HEK293 (cell line): ENCODE measurements at regions of chr6 and their contacts with region 1.

Region 1: GRCh38 chr6:75526502-75527127 is 33.0 kb upstream of the FILIP1 start:
- H3K4me3 ChIP-seq: no peak overlapping the region
- H3K27ac ChIP-seq: no peak overlapping the region
- H3K4me1 ChIP-seq: peaks cover 20% of the 10 kb centered on the region
- CTCF ChIP-seq: peak; percentile 51

Region 2: DNA sequence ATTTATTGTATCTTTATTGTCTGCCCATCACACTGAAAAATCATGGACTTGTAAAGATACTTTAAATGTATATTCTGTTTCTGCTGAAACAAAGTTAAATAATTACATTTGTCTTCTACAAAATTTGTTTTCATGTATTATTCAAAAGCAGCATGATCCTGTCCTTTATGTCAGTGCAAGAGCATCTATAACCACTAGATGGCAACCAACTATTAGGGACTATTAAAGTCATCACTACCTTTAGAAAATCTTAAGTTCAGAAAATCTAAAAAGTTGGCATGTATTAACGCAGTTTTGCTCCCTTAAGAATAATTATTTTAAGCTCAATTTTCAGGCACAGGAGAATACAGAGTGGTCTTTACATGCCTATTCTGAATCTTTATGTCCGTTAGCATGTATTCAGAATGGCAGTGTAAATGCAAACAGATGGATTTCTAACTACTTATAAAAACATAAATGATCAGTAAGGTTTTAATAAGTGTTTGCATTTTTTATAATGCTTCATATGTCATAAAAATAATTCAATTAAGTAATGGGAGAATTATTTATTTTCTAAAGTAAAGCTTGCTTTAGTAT is 259.8 kb before region 1 on chr6:
- CTCF ChIA-PET with region 1: interaction called, 26 read pairs
- POLR2A ChIA-PET with region 1: interaction called, 6 read pairs
- H3K4me3 ChIP-seq: no peak overlapping the region
- H3K27ac ChIP-seq: no peak overlapping the region
- H3K4me1 ChIP-seq: peaks cover 14% of the 10 kb centered on the region
- CTCF ChIP-seq: no peak; the same call in 1 of the 2 replicates

Region 3: GRCh38 chr6:75284632-75285286 is 241.9 kb before region 1 on chr6 and contains the start of gene TMEM30A:
- CTCF ChIA-PET with region 1: interaction called, 5 read pairs
- POLR2A ChIA-PET with region 1: interaction called, 12 read pairs
- H3K4me3 ChIP-seq: peak within 1 kb of the TSS; percentile 97
- H3K27ac ChIP-seq: peak within 1 kb of the TSS; percentile 64
- H3K4me1 ChIP-seq: peaks cover 6% of the 10 kb centered on the region; the same call in 1 of the 2 replicates
- CTCF ChIP-seq: peak; percentile 66

Region 4: DNA sequence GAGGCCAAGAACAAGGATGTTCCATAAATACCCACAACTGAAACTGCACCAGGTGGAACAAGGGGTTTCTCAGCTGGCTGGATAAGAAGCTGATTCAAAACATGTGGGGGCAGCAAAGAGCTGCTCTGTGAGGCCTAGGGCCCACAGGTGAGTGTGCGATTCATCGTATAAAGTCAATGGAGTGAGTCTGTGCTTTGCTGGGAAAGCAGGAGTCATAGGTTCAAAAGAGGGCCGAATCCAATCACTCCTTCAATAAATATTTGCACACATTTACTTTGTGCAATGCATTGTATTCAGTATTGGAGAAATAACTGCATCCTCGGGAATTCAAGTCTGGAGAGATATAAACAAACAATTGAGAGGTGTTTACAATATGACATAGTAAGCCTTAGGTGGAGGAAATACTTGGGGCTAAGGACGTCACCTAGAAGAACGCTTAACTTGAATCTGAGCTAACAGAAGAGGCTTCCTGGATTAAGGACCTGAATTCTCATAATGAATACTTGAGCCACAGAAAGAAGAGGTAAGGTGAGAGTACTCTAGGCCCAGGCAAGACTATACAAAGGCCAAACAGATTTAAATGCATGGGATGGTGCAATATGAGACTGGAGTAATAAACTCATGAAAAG is 158.3 kb before region 1 on chr6:
- CTCF ChIA-PET with region 1: interaction called, 93 read pairs
- POLR2A ChIA-PET with region 1: interaction called, 9 read pairs
- H3K4me3 ChIP-seq: no peak overlapping the region
- H3K27ac ChIP-seq: no peak overlapping the region
- H3K4me1 ChIP-seq: no peaks in the 10 kb centered on the region
- CTCF ChIP-seq: peak; percentile 71

Region 5: DNA sequence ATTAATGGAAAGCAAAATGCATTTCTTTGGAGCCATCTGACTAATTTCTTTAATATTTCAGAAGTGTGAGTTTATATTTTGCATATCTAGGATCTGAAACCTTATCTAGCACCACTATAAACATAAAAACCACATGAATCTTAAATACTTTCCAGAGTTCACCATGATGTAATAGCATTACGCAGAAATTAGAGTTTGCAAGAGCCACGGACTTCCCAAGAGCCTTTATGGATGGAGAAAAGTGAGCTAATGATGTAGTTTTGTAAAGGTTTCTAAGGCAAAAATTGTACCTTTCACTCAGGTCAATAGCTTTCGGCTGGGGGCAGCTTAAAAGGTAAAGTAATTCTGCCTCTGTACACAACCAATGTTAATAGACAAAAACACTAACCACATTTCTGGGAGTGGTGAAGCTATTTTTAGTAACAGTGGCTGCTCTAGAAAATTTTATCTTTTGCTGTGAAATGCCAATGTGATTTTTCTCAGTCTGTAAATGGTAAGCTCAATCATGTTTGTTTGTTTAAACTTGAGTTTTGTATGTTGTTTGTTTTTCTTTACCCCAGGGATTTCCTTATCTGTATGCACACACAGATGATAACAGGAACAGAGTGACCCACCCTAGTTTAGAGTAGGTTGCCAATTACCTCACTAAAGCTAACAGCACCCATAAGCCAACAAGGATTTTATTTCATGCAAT is 113.5 kb before region 1 on chr6:
- CTCF ChIA-PET with region 1: interaction called, 4 read pairs
- POLR2A ChIA-PET with region 1: interaction called, 10 read pairs
- H3K4me3 ChIP-seq: no peak overlapping the region
- H3K27ac ChIP-seq: peak overlapping the region; percentile 63
- H3K4me1 ChIP-seq: peaks cover 25% of the 10 kb centered on the region
- CTCF ChIP-seq: no peak

Region 6: DNA sequence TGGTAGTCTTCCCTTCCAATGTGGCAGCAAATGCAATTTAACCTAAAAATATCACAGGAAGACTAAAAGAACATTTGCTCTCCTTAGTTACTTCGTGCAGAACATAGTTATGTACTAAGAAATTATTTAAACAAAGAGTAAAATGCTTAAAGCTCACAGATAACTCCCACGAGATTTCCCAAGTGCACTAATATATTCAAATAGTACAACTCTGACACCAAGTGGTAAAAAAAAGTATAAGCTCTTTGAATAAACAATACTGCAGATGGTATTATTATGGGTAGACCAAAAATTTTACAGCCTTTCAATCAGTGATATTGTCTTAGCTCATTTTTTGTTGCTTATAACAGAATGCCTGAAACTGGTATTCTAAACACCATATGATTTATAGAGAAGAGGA is 19.8 kb after region 1 on chr6:
- CTCF ChIA-PET with region 1: interaction called, 19 read pairs
- POLR2A ChIA-PET with region 1: no interaction called
- H3K4me3 ChIP-seq: no peak overlapping the region
- H3K27ac ChIP-seq: no peak overlapping the region
- H3K4me1 ChIP-seq: no peaks in the 10 kb centered on the region
- CTCF ChIP-seq: no peak